HepG2 (cell line): ENCODE measurements at regions of chr20 and their contacts with region 1.

Region 1: DNA sequence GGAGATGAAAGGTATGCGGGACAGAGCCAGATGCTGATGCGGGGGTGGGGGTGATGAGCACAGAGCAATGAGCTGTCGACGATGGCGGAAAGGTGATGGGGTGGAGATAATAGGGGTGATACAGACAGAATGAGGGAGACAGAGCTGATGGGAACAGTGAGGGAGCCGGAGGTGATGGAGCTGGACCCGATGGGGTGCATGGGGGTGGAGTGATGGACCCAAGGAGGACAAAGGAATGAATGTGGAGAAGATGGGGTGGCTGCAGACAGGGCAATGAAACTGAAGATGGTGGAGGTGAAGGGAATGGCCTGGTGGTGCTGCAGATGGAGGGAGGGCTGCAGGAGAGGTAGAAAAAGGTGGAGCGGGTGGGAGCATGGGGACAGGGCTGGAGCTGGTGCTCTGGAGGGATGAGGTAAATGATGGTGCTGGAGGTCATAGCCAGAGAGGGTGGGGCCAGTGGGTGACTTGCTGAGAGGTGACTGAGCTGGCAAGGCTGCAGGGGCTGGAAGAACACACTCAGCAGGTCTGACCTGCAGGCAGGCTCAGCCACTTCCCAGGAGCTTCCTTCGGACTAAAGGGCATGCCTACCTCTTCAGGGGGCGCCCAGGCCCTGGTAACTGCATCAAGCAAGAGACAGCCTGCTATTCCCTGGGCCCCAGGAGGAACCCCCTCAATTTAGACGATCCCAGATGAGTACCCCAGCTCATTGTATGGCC is 6.0 kb upstream of the FOXS1 start:
- DNase-seq: no peak
- ATAC-seq: no peak
- H3K4me3 ChIP-seq: no peak overlapping the region
- H3K27ac ChIP-seq: no peak overlapping the region
- H3K4me1 ChIP-seq: no peaks in the 10 kb centered on the region
- H3K27me3 ChIP-seq: peaks cover 22 to 51% of the 10 kb centered on the region in 2 experiments
- CTCF ChIP-seq: no peak
- EP300 ChIP-seq: no peak
- POLR2A ChIP-seq: no peak
- RAD21 ChIP-seq: no peak

Region 2: DNA sequence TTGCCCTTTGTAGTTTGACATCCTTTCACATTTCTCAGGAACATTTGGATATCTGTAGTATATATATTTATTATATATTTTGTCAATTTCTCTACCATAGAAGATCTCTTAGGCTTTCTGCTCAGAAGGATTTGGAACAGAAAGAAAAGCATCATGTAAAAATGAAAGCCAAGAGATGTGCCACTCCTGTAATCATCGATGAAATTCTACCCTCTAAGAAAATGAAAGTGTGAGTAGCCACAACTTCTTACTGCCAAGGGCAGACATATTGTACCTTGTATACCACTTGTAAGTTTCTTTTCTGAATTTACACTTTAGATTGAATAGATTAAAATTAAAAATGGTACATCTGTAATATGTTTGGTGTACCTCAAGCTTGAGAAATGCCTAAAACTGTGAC is 81.2 kb before region 1 on chr20:
- CTCF ChIA-PET with region 1: no interaction called
- POLR2A ChIA-PET with region 1: no interaction called
- in situ Hi-C with region 1: no loop called
- intact Hi-C with region 1: no loop called
- DNase-seq: no peak
- ATAC-seq: no peak
- H3K4me3 ChIP-seq: no peak overlapping the region
- H3K27ac ChIP-seq: no peak overlapping the region
- H3K4me1 ChIP-seq: no peaks in the 10 kb centered on the region
- H3K27me3 ChIP-seq: no peaks in the 10 kb centered on the region
- CTCF ChIP-seq: no peak
- EP300 ChIP-seq: no peak
- POLR2A ChIP-seq: no peak
- RAD21 ChIP-seq: no peak

Region 3: GRCh38 chr20:31923388-31924331 is 72.3 kb after region 1 on chr20:
- CTCF ChIA-PET with region 1: no interaction called
- POLR2A ChIA-PET with region 1: no interaction called
- in situ Hi-C with region 1: no loop called
- intact Hi-C with region 1: no loop called
- DNase-seq: no peak
- ATAC-seq: no peak
- H3K4me3 ChIP-seq: no peak overlapping the region
- H3K27ac ChIP-seq: no peak overlapping the region
- H3K4me1 ChIP-seq: no peaks in the 10 kb centered on the region
- H3K27me3 ChIP-seq: peaks cover 5 to 48% of the 10 kb centered on the region in 2 experiments
- CTCF ChIP-seq: no peak
- EP300 ChIP-seq: no peak
- POLR2A ChIP-seq: no peak
- RAD21 ChIP-seq: no peak

Region 4: DNA sequence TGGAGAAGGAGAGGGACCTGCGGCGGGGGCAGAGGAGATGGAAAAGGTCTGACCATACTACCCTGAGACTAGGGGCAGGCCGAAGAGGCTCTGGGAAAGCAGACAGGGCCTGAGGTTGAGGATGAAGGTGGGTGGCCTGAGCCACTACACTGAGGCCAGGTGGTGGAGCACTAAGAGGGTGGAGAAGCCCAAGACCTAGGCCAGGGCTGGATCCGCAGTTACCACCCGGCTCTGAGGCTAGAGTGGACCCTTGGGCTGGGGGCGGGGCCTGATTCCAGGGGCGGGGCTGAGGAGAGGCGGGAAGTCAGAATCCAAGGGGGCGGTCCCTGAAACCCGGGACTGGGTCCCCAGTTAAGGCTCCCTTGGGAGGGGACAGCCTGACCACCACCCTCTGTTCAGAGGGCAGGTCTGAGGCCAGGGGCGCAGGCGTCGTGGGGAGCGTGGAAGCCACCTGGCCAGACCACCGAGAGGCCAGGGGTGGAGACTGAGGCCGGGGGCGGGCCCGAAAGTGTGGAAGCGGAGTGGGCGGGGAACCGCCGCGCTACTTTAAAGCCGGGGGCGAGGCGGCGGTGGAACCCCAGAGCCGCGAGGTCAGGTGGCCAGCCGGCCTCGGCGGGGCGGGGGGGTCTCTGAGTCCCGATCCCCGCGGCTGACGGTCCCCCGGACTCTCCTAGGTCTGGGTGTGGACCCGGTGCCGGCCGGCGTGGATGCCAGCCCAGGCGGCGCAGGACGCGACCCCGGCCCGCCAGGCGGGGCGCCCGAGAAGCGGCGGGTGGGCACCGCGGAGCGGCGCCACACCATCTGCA is 167.1 kb after region 1 on chr20:
- CTCF ChIA-PET with region 1: interaction called, 4 read pairs
- POLR2A ChIA-PET with region 1: no interaction called
- in situ Hi-C with region 1: no loop called
- intact Hi-C with region 1: loop called (anchors 5 kb)
- DNase-seq: peak; percentile 76
- ATAC-seq: peak; percentile 92
- H3K4me3 ChIP-seq: peak overlapping the region; percentile 58 to 81 (median 65); a peak in 5 of 6 replicates
- H3K27ac ChIP-seq: no peak overlapping the region
- H3K4me1 ChIP-seq: peaks cover 13% of the 10 kb centered on the region
- H3K27me3 ChIP-seq: peaks cover 15 to 70% of the 10 kb centered on the region in 2 experiments; a peak in 4 of 5 replicates
- CTCF ChIP-seq: peak; percentile 24; the same call in 1 of the 2 replicates
- EP300 ChIP-seq: no peak
- POLR2A ChIP-seq: no peak
- RAD21 ChIP-seq: no peak